Activated T-helper 2 cell treated with anti-CD3 and anti-CD28 coated beads, Interferon-gamma antibody, Interleukin-2, Interleukin-4, amounts not matched to agents 10 μg/mL and 5 μg/mL and 100 μg/mL, durations not matched to agents 14 hours and 24 hours and 36 hours (primary cell): ENCODE measurements at regions of chr3 and their contacts with region 1.

Region 1: DNA sequence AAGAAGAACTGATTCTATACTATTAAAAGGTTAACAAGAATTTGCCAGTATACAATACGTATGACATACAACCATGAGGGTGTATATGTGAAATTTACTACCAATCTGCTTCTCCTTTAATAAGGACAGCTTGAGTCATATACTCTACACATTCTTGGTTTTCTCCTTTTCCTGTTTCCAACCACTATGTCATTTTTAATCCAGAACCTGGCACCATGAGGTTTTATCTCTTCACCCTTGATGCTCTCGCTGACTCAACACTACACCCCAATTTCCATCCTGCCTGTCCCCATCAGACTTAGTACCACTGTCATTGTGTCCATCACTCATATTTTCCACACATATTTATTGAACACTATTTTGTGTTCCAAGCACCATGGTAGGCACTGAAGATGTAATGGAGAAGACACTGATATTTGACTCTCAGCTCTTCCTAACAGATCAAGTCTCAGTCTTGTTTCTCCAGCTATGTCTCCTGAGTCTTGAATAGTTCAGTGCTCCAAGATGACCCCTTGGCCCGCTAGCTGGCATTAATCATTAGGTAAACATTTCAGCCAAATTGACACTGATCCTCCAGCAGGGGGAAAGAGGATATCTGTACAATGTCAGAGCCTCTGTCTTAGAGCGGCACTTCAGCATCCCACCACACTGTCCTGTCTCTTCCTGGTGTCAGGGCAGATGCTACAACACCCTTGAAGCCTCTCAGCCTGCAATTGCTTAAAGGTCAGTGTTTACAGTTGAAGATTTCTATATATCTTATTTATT is 11.2 kb upstream of the COL8A1 start:
- DNase-seq: no peak
- H3K4me3 Mint-ChIP-seq: no peak overlapping the region
- H3K27ac Mint-ChIP-seq: peak overlapping the region; percentile 10
- H3K4me1 Mint-ChIP-seq: peaks cover 24% of the 10 kb centered on the region
- H3K27me3 Mint-ChIP-seq: peaks cover 7% of the 10 kb centered on the region

Region 2: DNA sequence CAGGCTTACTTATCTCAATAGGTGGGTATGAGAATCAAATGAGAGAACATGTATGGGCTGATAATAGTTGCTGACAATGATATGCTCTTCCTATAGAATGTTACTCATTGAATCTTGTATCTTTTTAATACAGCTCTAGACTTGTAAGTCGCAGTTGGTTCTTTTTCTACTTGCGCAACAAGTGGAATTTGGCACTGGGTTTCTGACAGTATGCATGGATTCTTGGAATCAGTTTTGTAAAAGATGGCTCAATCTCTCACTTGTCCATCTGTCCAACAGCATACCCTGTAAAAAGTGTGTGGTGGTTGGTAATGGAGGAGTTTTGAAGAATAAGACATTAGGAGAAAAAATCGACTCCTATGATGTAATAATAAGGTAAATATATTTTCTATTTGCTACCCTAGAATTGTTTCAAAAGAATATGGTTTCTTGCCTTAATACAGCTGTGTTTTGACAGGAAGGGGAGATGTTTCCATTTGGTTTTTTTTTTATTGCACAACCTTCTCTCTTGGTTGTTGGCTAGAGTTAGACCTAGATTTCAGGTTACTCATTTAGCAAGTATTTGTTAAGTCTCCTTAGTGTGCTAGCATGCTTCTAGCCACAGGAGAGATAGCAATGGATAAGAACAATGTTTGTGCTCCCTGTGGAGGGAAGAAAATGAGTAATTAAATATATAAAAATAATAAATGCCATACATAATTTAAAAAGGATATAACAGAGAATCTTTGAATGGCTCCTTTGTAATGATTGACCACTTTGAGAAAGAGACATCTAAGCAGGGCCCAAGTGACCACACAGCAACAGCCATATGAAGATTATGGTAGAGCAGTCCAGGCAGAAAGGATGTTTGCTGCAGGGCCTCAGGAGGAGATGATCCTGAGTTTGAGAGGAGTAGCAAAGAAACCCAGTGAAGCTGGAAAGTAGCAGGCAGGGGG is 842.3 kb before region 1 on chr3:
- intact Hi-C with region 1: loop called (anchors 10 kb)
- DNase-seq: no peak
- H3K4me3 Mint-ChIP-seq: no peak overlapping the region
- H3K27ac Mint-ChIP-seq: no peak overlapping the region
- H3K4me1 Mint-ChIP-seq: peaks cover 35% of the 10 kb centered on the region
- H3K27me3 Mint-ChIP-seq: no peaks in the 10 kb centered on the region

Region 3: DNA sequence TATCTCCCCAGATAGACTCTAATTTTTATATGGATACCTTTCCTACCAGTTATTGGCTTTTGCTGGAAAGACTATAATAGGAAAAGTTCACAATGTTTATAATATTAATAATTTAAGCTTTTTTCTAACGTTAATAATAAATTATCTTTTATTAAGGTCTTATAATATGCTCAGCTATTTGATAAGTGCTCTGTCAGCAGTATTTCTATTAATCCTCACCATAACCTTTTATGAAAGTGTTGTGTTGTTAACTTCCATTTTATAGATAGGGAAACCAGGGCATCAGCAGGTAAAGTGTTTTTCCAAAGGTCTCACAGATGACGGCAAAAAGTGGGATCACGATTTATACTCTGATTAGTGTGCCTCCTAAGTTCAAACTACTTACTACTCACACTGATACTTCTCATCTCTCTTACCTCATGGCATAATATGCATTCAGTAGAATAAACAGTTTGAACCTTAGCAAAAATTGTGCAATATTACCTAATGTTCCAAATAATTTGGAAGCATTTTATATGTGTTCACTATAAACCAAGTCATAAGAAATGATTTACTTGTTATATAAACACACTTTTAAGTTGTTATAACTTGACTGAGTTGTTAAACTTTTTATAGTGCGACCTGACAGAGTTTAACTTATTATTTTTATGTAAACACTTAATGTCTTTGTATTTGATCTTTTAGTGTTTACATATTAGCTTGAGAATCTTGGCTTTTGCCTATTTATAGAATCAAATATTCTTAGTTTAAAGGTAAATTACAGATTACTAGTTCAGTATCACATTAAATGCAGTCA is 450.9 kb before region 1 on chr3:
- intact Hi-C with region 1: no loop called
- DNase-seq: no peak
- H3K4me3 Mint-ChIP-seq: no peak overlapping the region
- H3K27ac Mint-ChIP-seq: no peak overlapping the region
- H3K4me1 Mint-ChIP-seq: no peaks in the 10 kb centered on the region
- H3K27me3 Mint-ChIP-seq: no peaks in the 10 kb centered on the region

Region 4: DNA sequence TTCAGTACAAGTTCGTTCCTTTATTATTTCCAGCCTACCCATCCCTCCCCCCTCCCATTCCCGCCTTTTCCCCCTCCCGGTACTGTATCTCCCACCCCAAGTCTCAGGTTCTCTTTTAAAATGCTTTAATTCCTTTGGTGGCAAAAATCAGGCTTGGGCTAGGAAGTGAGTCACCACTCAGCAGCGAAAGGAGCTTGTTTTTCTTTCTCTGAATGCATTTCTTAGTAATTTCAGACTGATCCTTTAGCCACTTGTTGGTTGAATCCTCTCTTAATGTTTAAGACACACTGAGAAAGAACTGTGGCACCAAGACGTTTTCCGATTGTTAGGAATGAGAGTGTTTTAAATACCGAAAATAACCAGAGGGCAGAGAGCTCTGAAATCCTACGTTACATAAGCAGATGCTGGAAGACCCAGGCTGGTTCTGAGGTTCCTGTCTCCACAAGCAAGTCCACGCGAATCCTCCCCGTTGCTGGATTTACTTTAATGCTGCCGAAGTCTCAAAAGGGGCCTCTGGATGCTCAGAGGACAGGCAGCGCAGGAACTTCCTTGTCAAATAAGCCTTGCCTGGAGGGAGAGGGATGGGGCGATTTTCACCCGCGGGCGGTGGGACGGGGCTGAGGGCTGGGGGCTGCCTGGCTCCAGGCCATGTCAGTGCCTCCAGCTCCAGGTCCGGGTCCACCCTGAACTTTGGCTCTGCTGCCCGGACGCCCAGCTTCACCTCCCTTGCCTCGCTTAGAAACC is 10.3 kb after region 1 on chr3:
- intact Hi-C with region 1: loop called (anchors 1 kb)
- DNase-seq: no peak
- H3K4me3 Mint-ChIP-seq: peak overlapping the region; percentile 61
- H3K27ac Mint-ChIP-seq: peak overlapping the region; percentile 46
- H3K4me1 Mint-ChIP-seq: peaks cover 14% of the 10 kb centered on the region
- H3K27me3 Mint-ChIP-seq: peaks cover 76% of the 10 kb centered on the region

Region 5: DNA sequence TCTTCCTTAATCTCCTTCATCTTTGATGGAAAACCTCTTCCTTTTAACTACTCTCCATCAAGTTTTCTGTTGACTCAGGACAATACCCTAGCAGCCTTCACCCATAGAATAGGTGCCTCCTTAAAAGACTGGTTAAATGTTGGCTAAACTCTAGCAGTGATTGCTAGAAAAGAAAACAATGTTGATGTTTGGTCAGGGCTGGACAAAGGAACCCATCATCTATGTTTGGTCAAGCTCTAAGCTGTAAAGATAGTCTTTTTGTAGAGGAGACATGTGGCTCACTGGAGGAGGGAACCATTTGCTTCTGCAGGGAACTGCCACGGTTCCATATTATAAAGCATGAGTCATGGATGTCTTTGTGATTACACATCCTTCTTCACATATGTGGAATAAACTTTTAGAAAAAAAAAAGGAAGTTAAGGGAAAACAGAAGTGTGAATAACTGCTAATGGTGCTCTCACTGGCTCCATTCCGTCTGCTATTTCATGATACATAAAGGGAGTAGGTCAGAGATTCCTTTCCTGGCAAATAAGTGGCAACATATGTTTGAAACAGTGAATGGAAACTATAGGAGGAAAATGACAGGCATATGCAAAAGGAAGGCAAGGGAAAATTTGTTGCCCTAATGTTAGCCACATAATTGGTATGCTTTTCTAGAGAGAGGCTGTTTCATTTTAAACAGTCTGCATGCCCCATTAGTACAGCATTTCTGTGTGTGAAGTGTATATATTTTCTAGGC is 268.6 kb after region 1 on chr3:
- intact Hi-C with region 1: no loop called
- DNase-seq: no peak
- H3K4me3 Mint-ChIP-seq: no peak overlapping the region
- H3K27ac Mint-ChIP-seq: no peak overlapping the region
- H3K4me1 Mint-ChIP-seq: peaks cover 19% of the 10 kb centered on the region
- H3K27me3 Mint-ChIP-seq: no peaks in the 10 kb centered on the region